Activated CD4-positive, alpha-beta T cell treated with anti-CD3 and anti-CD28 coated beads, Interleukin-2, amount 10 ng/mL, durations not matched to agents 24 days and 14 days (primary cell): ENCODE measurements at regions of chr19 and their contacts with region 1.

Region 1: GRCh38 chr19:42283143-42284065 is 14.4 kb downstream of the CIC start:
- DNase-seq: peak; percentile 98
- H3K4me3 Mint-ChIP-seq: no peak overlapping the region
- H3K27ac Mint-ChIP-seq: no peak overlapping the region
- H3K4me1 Mint-ChIP-seq: peaks cover 39% of the 10 kb centered on the region
- H3K27me3 Mint-ChIP-seq: no peaks in the 10 kb centered on the region

Region 2: DNA sequence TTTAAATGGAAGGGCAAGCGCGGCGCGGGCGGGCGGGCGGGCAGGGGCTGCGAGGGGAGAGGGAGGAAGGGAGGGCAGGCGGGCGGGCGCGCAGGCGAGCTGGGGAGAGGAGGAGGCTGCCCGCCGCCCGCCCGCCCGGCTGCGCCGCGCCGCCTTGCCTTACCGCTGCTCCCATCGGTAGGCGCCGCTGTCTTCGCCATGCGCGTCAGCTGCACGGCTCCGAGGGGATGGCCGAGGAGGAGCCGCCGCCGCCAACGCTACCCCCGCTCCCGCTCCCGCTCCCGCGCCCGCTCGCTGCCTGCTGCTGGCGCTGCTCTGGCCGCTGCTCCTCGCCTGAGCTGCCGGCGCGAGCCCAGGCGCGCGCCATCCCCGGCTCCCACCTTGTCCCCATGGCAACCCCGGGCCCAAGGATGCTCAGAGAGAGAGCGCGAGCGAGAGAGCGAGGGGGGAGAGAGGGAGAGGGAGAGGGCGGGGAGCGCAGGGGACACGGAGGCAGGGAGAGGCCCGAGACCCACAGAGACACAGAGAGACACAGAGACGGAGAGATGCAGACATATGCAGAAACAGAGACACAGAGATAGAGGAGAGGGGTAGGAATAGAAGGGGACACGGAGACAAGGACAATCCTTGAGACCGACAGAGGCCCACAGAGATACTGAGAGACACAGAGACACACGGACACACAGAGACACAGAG is 106.3 kb before region 1 on chr19:
- intact Hi-C with region 1: no loop called
- DNase-seq: peak; percentile 94
- H3K4me3 Mint-ChIP-seq: peak overlapping the region; percentile 90
- H3K27ac Mint-ChIP-seq: no peak overlapping the region
- H3K4me1 Mint-ChIP-seq: peaks cover 16% of the 10 kb centered on the region
- H3K27me3 Mint-ChIP-seq: peaks cover 41% of the 10 kb centered on the region

Region 3: GRCh38 chr19:42219812-42220750 is 63.3 kb before region 1 on chr19 and contains the start of gene ZNF526:
- intact Hi-C with region 1: loop called (anchors 2 kb)
- DNase-seq: peak; percentile 100
- H3K4me3 Mint-ChIP-seq: peak within 1 kb of the TSS; percentile 96
- H3K27ac Mint-ChIP-seq: peak within 1 kb of the TSS; percentile 94
- H3K4me1 Mint-ChIP-seq: peaks cover 50% of the 10 kb centered on the region
- H3K27me3 Mint-ChIP-seq: peaks cover 2% of the 10 kb centered on the region
- total RNA-seq, gene ZNF526: 19.0 and 20.1 TPM in 2 replicates

Region 4: GRCh38 chr19:42254989-42255765 is 28.2 kb before region 1 on chr19 and contains the start of gene ERF:
- intact Hi-C with region 1: loop called (anchors 1 kb)
- DNase-seq: peak; percentile 98
- H3K4me3 Mint-ChIP-seq: peak within 1 kb of the TSS; percentile 78
- H3K27ac Mint-ChIP-seq: peak within 1 kb of the TSS; percentile 81
- H3K4me1 Mint-ChIP-seq: peaks cover 19% of the 10 kb centered on the region
- H3K27me3 Mint-ChIP-seq: peaks cover 10% of the 10 kb centered on the region
- total RNA-seq, gene ERF: 71.6 and 82.3 TPM in 2 replicates

Region 5: DNA sequence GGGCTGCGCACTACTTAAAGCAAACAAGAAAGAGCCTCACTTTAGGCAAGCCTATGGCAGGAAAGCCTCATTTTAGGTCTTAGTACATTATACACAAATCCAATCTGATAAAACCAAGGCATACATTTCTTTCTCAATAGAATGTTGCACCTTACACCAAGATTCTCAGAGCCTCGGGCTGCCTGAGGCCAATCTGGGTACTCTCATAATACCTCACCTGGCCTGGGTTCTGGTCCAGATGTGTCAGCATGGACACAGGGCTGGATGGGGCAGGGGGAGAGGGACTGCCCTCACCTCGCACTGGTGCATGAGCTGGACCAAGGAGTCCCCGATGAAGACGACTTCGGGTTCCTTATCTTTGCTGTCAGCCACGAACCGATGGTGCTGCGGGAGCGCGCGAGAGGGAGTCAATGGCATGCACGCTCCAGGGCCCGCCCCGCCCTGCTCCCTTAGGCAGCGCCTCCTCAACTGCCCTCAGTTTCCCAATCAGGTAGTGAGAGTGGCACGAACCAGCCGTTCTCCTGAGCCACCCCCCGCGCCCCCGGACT is 18.3 kb after region 1 on chr19 and contains the start of gene PRR19:
- intact Hi-C with region 1: loop called (anchors 1 kb)
- DNase-seq: no peak
- H3K4me3 Mint-ChIP-seq: peak within 1 kb of the TSS; percentile 92
- H3K27ac Mint-ChIP-seq: peak within 1 kb of the TSS; percentile 90
- H3K4me1 Mint-ChIP-seq: peaks cover 21% of the 10 kb centered on the region
- H3K27me3 Mint-ChIP-seq: no peaks in the 10 kb centered on the region
- total RNA-seq, gene PRR19: 1.3 and 1.6 TPM in 2 replicates

Region 6: GRCh38 chr19:42423462-42424344 is 140.3 kb after region 1 on chr19:
- intact Hi-C with region 1: loop called (anchors 5 kb)
- DNase-seq: peak; percentile 98
- H3K4me3 Mint-ChIP-seq: peak overlapping the region; percentile 91
- H3K27ac Mint-ChIP-seq: peak overlapping the region; percentile 91
- H3K4me1 Mint-ChIP-seq: peaks cover 36% of the 10 kb centered on the region
- H3K27me3 Mint-ChIP-seq: no peaks in the 10 kb centered on the region